CD4-positive, alpha-beta T cell (primary cell): ENCODE measurements at regions of chr19 and their contacts with region 1.

Region 1: DNA sequence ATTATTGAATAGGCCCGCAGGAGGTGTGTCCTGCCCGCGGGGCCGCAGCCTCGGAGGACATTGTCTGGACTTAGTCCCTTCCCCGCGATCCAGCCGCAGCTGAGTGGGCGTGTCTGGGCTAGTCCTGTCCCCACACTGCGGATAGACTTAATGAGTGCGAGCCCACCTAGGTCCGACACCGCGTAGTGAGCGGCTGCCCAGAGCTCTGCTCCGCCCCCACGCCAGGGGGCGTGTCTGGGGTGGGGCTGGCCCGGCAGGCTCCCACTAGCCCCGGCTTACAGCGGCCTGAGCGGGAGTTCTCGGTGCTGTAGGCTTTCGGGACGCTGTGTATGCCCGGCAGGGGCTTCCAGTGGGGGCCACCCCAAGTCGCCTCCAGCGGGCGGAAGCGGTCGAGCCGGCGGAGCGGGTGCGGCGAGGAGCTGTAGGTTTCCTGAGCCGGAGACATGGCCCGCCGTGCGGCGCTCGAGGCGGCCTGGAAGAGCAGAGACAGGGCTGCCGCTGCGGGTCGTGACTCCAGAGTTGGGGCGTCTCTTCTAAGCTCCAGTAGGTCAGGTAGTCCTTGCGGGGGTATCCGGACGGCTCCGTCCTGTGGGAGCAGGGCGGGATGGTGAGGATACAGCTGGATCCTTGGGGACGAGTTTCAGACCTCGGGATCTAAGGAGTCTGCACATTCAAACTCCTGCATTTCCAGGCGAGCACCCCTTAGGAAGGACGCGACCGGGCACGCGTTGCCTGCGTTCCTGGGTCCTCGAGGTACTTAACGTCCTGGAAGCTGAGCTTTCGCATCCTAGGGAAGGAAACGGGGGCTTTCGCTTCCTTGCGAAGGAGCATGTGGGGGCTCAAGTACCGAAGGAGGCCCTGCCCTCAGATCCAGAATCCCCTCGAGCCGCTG is 1.3 kb downstream of the CGB7 start:
- DNase-seq: peak in 11 of 14 experiments; percentile 19 to 71 (median 50)
- ATAC-seq: peak; percentile 71
- H3K4me3 ChIP-seq: peak overlapping the region; percentile 59
- H3K4me3 Mint-ChIP-seq: peak overlapping the region; percentile 89
- H3K27ac ChIP-seq: no peak overlapping the region
- H3K27ac Mint-ChIP-seq: no peak overlapping the region
- H3K4me1 ChIP-seq: peaks cover 26% of the 10 kb centered on the region
- H3K4me1 Mint-ChIP-seq: peaks cover 21% of the 10 kb centered on the region
- H3K27me3 ChIP-seq: peaks cover 25 to 32% of the 10 kb centered on the region in 2 experiments
- H3K27me3 Mint-ChIP-seq: peaks cover 48% of the 10 kb centered on the region
- CTCF ChIP-seq: peak; percentile 39

Region 2: DNA sequence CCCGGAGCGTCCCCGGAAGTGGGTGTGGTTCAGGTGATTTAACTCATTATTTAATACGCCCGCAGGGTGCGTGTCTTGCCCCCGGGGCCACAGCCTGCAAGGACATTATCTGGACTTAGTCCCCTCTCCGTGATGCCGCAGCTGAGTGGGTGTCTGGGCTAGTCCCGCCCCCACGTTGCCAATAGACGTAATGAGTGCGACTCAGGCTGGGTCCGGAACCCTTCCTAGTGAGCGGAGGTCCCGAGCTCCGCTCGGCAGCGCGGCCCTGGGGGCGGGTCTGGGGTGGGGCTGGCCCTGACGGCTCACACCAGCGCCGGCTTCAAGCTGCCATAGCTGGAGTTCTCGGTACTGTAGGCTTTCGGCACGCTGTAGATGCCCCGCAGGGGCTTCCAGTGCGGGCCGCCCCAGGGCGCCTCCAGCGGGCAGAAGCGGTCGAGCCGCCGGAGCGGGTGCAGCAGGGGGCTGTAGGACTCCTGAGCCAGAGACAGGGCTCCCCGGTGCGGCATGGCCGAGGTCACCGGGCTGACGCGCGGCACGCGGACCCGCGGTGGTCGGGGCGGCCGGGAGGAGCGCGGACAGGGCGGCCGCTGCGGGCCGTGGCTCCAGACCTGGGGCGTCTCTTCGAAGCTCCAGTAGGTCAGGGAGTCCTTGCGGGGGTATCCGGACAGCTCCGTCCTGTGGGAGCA is 38.4 kb before region 1 on chr19:
- CTCF ChIA-PET with region 1: interaction called, 3 read pairs
- POLR2A ChIA-PET with region 1: interaction called, 3 read pairs
- intact Hi-C with region 1: loop called in 1 of 2 experiments (anchors 5 kb)
- DNase-seq: peak; percentile 48 to 84 (median 64)
- ATAC-seq: peak; percentile 86
- H3K4me3 ChIP-seq: peak overlapping the region; percentile 63
- H3K4me3 Mint-ChIP-seq: peak overlapping the region; percentile 90
- H3K27ac ChIP-seq: peak overlapping the region in 1 of 2 donors; percentile 29
- H3K27ac Mint-ChIP-seq: no peak overlapping the region
- H3K4me1 ChIP-seq: peaks cover 40% of the 10 kb centered on the region
- H3K4me1 Mint-ChIP-seq: peaks cover 25% of the 10 kb centered on the region
- H3K27me3 ChIP-seq: peaks cover 0 to 4% of the 10 kb centered on the region in 2 experiments
- H3K27me3 Mint-ChIP-seq: peaks cover 5% of the 10 kb centered on the region
- CTCF ChIP-seq: peak; percentile 78